Activated T-helper 2 cell treated with anti-CD3 and anti-CD28 coated beads, Interferon-gamma antibody, Interleukin-2, Interleukin-4, amounts not matched to agents 10 μg/mL and 5 μg/mL and 100 μg/mL, durations not matched to agents 14 hours and 24 hours and 36 hours (primary cell): ENCODE measurements at regions of chr9 and their contacts with region 1.

Region 1: GRCh38 chr9:117782931-117783788 is 79.0 kb downstream of the TLR4 start:
- DNase-seq: peak; percentile 62
- H3K4me3 Mint-ChIP-seq: no peak overlapping the region
- H3K27ac Mint-ChIP-seq: no peak overlapping the region
- H3K4me1 Mint-ChIP-seq: peaks cover 12% of the 10 kb centered on the region
- H3K27me3 Mint-ChIP-seq: peaks cover 16% of the 10 kb centered on the region

Region 2: GRCh38 chr9:117825609-117826347 is 42.6 kb after region 1 on chr9:
- intact Hi-C with region 1: loop called (anchors 2 kb)
- DNase-seq: peak; percentile 65
- H3K4me3 Mint-ChIP-seq: no peak overlapping the region
- H3K27ac Mint-ChIP-seq: no peak overlapping the region
- H3K4me1 Mint-ChIP-seq: peaks cover 25% of the 10 kb centered on the region
- H3K27me3 Mint-ChIP-seq: peaks cover 44% of the 10 kb centered on the region